Transverse colon (tissue), 4 donors: ENCODE measurements at regions of chr5 and their contacts with region 1.

Region 1: DNA sequence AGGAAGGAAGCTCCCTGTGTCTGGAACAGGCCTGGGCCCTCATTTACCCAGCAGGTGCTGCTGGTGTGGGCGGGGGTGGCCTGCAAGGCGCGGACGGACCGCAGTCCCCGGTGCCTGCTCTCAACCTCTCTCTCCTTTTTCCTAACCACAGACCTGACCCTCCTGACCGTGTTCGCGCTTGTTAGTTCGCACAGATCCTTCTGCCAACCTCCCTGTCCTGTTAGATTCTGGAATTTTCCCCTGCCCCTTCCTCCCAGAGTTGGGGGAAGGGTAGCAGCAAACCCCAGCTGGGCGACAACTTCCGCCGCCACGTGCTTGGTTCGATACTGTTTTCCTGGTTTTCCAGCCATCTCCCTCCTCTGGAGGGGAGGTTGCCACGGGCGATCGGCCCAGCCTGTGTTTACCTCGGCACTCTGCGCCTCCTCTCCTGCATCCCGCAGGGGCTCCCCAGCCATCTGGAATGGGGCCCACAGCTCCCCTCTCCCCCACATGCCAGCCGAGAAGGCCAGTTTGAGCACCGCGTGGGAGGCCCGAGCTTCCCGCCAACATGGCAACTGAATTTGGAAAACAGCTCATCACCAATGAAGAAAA is 70.8 kb upstream of the UNC5A start:
- DNase-seq: no peak
- H3K4me3 ChIP-seq: no peak overlapping the region
- H3K27ac ChIP-seq: no peak overlapping the region
- H3K4me1 ChIP-seq: peaks cover 0 to 8% (median 6%) of the 10 kb centered on the region in 4 donors
- H3K27me3 ChIP-seq: peaks cover 81% of the 10 kb centered on the region
- CTCF ChIP-seq: no peak
- EP300 ChIP-seq: no peak
- POLR2A ChIP-seq: no peak

Region 2: GRCh38 chr5:176697934-176698538 is 41.5 kb before region 1 on chr5:
- in situ Hi-C with region 1: no loop called
- intact Hi-C with region 1: loop called (anchors 1 kb)
- DNase-seq: no peak
- H3K4me3 ChIP-seq: no peak overlapping the region
- H3K27ac ChIP-seq: no peak overlapping the region
- H3K4me1 ChIP-seq: peaks cover 0 to 7% (median 2%) of the 10 kb centered on the region in 4 donors
- H3K27me3 ChIP-seq: peaks cover 38% of the 10 kb centered on the region
- CTCF ChIP-seq: no peak
- EP300 ChIP-seq: no peak
- POLR2A ChIP-seq: no peak

Region 3: GRCh38 chr5:176844706-176845391 is 105.3 kb after region 1 on chr5:
- in situ Hi-C with region 1: no loop called
- intact Hi-C with region 1: no loop called
- DNase-seq: no peak
- H3K4me3 ChIP-seq: no peak overlapping the region
- H3K27ac ChIP-seq: no peak overlapping the region
- H3K4me1 ChIP-seq: no peaks in the 10 kb centered on the region
- H3K27me3 ChIP-seq: peaks cover 59% of the 10 kb centered on the region
- CTCF ChIP-seq: no peak
- EP300 ChIP-seq: no peak
- POLR2A ChIP-seq: no peak